ENCODE measurements at regions of chr5 and their contacts with region 1.

Region 1: DNA sequence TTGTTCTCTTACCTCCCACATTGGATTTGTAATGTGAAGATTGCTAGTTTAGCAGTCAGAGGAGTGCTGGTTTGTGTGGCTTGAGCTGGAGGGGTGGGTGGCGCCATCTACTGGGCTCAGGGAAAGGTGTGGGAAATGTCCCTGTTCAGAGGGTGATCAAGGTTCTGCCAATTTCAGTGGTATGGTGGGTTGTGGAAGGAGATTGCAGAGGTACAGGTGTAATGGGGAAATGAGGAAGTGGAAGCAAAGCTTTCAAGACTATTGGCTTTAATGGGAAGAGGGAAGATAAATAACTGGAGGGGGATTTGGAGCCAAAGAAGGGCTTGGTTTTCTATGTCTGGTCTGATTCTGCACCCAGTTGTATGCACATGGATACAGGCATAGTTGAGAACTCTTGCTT is 76.4 kb downstream of the OSMR start:
- DNase-seq: peak; percentile 73
- ATAC-seq: peak; percentile 92
- H3K4me3 ChIP-seq: no peak overlapping the region
- H3K27ac ChIP-seq: no peak overlapping the region
- H3K4me1 ChIP-seq: no peaks in the 10 kb centered on the region
- H3K27me3 ChIP-seq: no peaks in the 10 kb centered on the region
- CTCF ChIP-seq: peak; percentile 73

Region 2: GRCh38 chr5:38237681-38238080 is 684.5 kb before region 1 on chr5:
- intact Hi-C with region 1: no loop called
- DNase-seq: no peak
- ATAC-seq: no peak
- H3K4me3 ChIP-seq: no peak overlapping the region
- H3K27ac ChIP-seq: no peak overlapping the region
- H3K4me1 ChIP-seq: no peaks in the 10 kb centered on the region
- H3K27me3 ChIP-seq: no peaks in the 10 kb centered on the region
- CTCF ChIP-seq: no peak

Region 3: DNA sequence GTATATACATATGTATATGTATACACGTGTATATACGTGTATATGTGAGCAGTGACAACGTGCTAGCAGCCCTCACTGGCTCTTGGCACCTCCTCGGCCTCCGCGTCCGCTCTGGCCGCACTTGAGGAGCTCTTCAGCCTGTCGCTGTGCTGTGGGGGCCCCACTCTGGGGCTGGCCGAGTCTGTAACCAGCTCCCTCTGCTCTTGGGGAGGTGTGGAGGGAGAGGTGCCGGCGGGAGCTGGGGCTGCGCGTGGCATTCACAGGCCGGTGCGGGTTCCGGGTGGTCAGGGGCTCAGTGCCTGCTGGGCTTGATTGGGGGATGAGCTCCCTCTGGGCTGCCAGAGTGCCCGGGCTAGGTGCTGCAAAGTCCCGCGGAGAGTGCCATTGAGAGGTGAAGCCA is 100.5 kb before region 1 on chr5:
- intact Hi-C with region 1: no loop called
- DNase-seq: no peak
- ATAC-seq: no peak
- H3K4me3 ChIP-seq: no peak overlapping the region
- H3K27ac ChIP-seq: no peak overlapping the region
- H3K4me1 ChIP-seq: no peaks in the 10 kb centered on the region
- H3K27me3 ChIP-seq: no peaks in the 10 kb centered on the region
- CTCF ChIP-seq: no peak

Region 4: DNA sequence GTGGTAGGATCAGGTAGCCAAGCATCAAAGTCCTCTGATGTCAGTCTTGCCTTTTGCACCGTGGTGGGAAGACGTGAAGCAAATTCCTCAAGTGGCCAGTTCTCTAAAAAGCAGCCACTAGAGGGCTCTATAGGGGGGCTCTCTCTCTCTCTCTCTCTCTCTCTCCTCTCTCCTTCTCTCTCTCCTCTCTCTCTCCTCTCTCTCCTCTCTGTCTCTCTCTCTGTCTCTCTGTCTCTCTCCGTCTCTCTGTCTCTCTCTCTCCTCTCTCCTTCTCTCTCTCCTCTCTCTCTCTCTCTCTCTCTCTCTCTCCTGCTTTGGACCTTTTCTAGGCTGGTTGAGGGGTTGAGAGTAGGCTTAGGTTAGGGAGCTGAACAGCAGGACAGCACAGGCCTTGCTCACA is 90.3 kb before region 1 on chr5:
- intact Hi-C with region 1: loop called (anchors 5 kb)
- DNase-seq: no peak
- ATAC-seq: peak; percentile 81
- H3K4me3 ChIP-seq: no peak overlapping the region
- H3K27ac ChIP-seq: no peak overlapping the region
- H3K4me1 ChIP-seq: no peaks in the 10 kb centered on the region
- H3K27me3 ChIP-seq: no peaks in the 10 kb centered on the region
- CTCF ChIP-seq: peak; percentile 37